Vagina (tissue), 2 donors: ENCODE measurements at regions of chr9 and their contacts with region 1.

Region 1: GRCh38 chr9:133188006-133188842 is 20.8 kb downstream of the OBP2B start:
- DNase-seq: no peak
- H3K4me3 ChIP-seq: no peak overlapping the region
- H3K27ac ChIP-seq: no peak overlapping the region
- H3K4me1 ChIP-seq: no peaks in the 10 kb centered on the region
- H3K27me3 ChIP-seq: no peaks in the 10 kb centered on the region
- CTCF ChIP-seq: no peak
- POLR2A ChIP-seq: no peak

Region 2: DNA sequence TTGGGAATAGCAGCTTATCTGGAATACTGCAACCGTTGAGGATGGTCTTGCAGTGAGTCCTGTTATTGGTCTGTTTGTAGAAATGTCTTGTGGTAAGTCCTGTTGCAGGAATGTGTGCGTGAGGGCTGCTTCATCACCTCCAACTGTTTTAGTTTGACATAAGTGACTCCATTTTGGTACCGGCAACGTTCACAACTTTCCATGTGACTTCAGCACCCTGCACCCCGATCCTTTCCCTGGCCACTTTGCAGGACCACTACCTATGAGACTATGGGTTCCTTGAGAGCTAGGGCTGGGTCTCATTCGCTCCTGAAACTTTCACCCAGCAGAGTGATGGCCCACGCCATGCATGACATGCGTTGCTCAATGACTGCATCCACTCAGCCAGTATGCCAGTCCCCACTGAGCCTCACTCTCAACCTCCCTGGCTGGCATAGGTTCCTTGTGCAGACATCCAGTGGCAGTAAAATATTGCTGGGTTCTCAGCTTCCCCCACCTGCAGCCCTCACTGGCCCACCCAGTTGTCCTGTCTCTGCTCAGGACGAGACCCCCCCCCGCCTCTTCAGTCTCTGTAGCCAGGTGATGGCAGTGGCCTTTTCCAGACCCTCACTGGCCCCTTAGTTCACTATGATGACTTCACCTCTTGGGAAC is 139.7 kb after region 1 on chr9:
- intact Hi-C with region 1: loop called (anchors 2 kb)
- DNase-seq: no peak
- H3K4me3 ChIP-seq: no peak overlapping the region
- H3K27ac ChIP-seq: no peak overlapping the region
- H3K4me1 ChIP-seq: peaks cover under 1% of the 10 kb centered on the region
- H3K27me3 ChIP-seq: no peaks in the 10 kb centered on the region
- CTCF ChIP-seq: no peak
- POLR2A ChIP-seq: no peak

Region 3: DNA sequence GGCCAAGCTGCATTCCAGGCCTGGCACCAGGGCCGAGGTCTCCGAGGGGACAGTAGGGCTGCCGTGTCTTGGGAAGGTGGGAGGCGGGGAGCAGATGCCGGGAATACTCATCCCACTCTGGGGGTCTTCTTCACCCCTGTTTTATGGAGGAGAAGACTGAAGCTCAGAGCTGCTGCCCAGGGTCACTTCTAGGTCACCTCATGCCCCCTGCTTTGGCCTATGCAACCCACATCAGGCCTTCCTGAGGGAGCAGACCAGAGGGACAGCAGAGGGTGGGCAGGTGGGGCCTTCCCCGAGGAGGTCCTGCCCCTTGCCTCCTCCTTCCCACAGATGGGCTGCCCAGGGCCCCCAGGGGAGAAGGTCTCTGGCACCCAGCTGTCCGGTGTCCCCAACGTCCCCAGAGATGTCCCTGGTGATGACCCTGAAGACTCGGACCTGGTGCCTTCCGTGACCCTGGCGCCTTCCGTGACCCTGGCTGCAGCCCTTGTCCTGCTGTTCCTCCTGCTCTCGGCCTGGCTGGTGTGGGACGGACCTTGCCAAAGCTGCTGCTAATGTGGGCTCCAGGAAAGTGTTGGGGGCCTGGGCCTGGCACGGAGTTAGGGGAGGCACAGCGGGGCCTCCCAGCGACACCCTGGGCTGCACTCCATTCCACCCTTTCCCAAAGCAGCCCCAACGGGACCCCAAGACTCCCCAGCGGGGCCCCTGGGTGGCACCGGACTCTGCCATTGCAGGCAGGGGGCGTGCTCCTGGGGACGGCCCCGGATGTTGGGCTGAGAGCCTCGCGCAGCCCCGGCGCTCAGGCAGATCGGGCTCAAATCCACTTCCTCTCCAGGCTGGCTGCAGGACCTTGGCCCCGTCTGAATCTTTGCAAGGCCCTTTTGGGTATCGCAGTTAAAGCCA is 297.4 kb after region 1 on chr9:
- intact Hi-C with region 1: loop called (anchors 2 kb)
- DNase-seq: no peak
- H3K4me3 ChIP-seq: no peak overlapping the region
- H3K27ac ChIP-seq: no peak overlapping the region
- H3K4me1 ChIP-seq: no peaks in the 10 kb centered on the region
- H3K27me3 ChIP-seq: no peaks in the 10 kb centered on the region
- CTCF ChIP-seq: no peak
- POLR2A ChIP-seq: no peak